ENCODE measurements at regions of chr5 and their contacts with region 1.

Region 1: DNA sequence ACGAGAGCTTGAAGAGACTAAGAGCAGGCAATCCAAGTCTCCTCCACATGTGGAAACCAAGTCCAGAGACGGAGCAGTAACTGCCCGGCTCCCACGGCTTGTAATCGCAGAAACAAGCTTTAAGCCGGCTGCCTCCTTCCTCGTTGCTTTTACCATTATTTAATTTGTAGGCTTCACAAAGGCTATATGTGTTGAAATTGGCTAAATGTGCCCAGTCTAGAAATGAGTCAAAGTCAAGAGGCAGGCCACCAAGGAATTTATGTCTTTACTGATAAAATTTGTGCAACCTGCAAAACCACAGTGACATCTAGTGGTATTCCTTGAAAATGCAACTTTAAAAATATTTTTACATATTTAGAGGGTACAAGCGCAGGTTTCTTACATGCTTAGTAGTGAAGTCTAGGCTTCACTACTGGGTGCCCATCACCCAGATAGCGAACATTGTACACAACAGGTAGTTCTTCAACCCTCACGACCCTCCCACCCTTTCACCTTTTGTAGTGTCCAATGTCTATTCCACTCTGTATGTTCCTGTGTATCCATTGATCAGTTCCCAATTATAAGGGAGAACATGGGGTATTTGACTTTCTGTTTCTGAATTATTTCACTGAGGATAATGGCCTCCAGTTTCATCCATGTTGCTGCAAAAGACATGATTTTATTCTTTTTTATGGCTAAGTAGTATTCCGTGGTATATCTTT is 33.5 kb upstream of the EBF1 start:
- DNase-seq: peak; percentile 61
- H3K4me3 Mint-ChIP-seq: no peak overlapping the region
- H3K27ac Mint-ChIP-seq: no peak overlapping the region
- H3K4me1 Mint-ChIP-seq: no peaks in the 10 kb centered on the region
- H3K27me3 Mint-ChIP-seq: peaks cover 25% of the 10 kb centered on the region

Region 2: DNA sequence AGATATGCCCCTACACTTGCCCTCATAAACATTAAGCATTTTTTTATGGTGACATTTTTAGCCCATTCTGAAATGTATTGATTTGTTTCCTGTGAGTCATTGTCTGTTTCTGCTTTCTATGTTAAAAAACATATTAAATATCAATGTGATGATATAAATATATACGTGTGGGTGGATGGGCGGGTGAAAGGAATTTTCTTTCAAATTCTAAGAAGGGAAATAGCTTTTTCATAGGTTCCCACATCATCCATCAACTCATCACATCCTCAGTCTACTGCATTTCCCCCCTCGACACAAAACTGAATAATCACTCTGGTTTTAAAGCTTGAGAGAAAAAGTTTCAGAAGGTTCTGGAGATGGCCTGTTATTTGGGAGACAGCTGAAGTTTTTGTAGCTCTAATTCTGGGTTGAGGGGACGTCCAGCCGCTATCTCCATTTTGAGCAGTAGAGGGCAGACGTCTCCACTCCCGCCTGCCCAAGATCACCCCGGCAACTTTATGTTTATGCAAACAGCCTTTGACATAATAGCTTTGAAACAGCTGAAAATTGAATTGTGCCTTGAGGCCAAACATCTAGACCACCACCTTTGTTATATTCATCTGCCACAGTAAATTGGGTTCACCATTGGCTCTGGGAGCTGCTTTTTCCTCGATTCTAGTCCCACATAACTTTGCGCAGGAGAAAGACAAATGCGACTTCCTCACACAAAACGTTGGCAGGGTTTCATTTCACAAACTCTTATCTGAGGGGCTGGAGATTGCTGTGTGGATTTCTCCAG is 1058.0 kb before region 1 on chr5:
- intact Hi-C with region 1: loop called (anchors 1 kb)
- DNase-seq: peak; percentile 83
- H3K4me3 Mint-ChIP-seq: no peak overlapping the region
- H3K27ac Mint-ChIP-seq: no peak overlapping the region
- H3K4me1 Mint-ChIP-seq: no peaks in the 10 kb centered on the region
- H3K27me3 Mint-ChIP-seq: peaks cover 17% of the 10 kb centered on the region

Region 3: DNA sequence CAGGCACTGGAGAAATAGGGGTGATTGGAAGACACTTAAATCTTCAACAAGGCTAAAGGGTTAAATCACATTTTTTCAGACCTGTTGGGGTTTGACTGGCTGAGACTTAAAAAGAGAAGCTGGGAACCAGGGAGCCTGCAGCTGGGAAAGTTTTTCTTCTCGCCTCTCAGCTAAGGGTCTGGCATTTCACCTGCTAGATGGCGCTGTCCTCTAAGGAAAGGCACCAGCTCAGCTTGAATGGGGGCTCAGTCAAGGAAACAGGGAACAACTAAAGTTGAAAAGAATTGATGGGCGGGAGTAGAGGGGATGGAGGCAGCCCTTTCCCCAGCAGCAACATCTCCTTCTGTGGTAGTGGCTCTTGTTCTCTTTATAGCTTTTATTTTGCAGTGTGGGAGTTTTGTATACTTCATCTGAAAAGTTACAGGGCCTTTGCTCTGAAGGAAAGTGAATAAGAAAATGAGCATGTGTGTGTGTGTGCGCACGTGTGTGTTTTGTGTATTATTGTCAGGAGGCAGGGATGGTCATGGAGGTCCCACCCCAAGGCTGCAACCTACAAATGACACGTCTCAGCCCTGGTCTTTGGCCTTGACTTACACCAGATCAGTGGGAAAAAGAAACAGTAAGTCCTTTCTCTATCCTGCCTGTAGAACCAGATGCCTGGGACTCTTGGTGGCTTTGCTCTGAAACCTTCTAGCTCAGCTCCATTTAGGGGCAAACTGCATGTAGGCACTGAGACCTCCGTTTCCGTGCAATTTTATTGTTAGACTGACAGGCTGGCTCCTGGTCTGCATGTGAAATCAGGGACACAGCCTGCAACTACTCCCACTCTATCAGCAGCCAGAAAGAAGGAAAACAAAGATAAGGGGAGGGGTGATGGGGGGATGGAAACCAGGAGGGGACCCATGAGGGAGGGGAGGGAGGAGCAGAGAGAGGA is 958.0 kb before region 1 on chr5:
- intact Hi-C with region 1: loop called (anchors 5 kb)
- DNase-seq: peak; percentile 84
- H3K4me3 Mint-ChIP-seq: no peak overlapping the region
- H3K27ac Mint-ChIP-seq: no peak overlapping the region
- H3K4me1 Mint-ChIP-seq: no peaks in the 10 kb centered on the region
- H3K27me3 Mint-ChIP-seq: no peaks in the 10 kb centered on the region

Region 4: GRCh38 chr5:158695595-158696330 is 437.4 kb before region 1 on chr5:
- intact Hi-C with region 1: loop called (anchors 1 kb)
- DNase-seq: peak; percentile 90
- H3K4me3 Mint-ChIP-seq: no peak overlapping the region
- H3K27ac Mint-ChIP-seq: no peak overlapping the region
- H3K4me1 Mint-ChIP-seq: peaks cover 2% of the 10 kb centered on the region
- H3K27me3 Mint-ChIP-seq: peaks cover 14% of the 10 kb centered on the region

Measured in activated CD4-positive, alpha-beta T cell treated with anti-CD3 and anti-CD28 coated beads, Interleukin-2, amount 10 ng/mL, durations not matched to agents 24 days and 14 days (primary cell).